ENCODE measurements at regions of chr11 and their contacts with region 1.

Region 1: DNA sequence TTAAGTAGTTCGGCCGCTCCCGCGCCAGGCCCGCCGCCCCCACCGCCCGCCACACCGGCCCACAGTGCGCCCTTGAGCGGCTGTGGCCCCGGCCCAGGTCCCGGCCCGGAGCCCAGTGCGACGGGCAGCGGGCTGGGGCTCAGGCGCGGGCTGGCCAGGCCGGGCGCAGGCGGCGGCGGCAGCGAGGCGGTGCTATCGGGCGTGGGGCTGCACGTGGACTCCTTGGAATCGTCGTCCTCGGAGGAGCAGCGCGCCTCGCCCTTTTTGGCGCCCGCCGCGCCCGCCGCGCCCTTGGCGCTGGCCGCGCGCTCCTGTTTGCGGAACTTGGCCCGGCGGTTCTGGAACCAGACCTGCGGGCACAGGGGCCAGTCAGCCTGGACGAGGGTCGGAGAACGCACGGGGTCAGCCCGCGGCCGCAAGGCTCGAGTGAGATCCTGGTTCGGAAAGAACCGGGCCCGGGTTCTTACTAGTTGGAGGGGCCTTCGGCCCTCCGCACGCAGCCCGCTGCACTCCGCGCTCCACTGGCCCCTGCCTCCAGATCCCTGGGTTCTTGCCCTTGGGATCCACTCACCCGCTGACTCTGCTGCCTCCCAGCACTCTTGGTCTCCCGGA is 4.0 kb downstream of the PHOX2A start:
- DNase-seq: peak in 4 of 5 donors; percentile 41 to 76 (median 68)
- H3K4me3 ChIP-seq: peak overlapping the region; percentile 25
- H3K27ac ChIP-seq: no peak overlapping the region
- H3K4me1 ChIP-seq: peaks cover 11% of the 10 kb centered on the region
- H3K27me3 ChIP-seq: peaks cover 12% of the 10 kb centered on the region
- CTCF ChIP-seq: peak in 1 of 3 donors; percentile 9
- EP300 ChIP-seq: no peak
- POLR2A ChIP-seq: no peak

Region 2: DNA sequence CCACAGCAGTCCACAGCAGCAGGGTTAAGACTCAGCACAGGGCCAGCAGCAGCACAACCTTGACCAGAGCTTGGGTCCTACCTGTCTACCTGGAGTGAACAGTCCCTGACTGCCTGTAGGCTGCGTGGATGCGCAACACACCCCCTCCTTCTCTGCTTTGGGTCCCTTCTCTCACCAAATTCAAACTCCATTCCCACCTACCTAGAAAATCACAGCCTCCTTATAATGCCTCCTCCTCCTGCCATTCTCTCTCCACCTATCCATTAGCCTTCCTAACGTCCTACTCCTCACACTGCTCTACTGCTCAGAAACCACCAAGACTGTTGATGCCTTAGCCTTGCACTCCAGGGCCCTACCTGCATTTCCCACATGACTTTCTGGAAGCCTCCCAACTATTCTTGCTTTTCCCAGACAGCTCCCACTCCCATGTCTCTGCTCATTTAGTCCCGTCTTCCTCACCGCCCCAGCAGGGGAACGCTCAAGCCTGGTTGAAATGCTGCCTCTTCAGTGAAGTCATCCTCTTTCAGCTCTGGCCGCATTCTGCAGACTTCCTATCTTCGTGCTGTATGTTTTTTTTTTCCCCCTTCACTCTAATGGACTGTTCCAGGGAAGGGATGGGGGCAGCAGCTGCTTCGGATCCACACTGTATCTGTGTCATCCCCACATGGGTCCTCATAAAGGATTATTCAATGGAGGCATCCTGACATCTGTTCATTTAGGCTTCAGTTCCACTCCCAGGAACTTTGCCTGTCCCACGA is 237.9 kb before region 1 on chr11:
- intact Hi-C with region 1: loop called in 1 of 4 experiments (anchors 10 kb)
- DNase-seq: no peak
- H3K4me3 ChIP-seq: no peak overlapping the region
- H3K27ac ChIP-seq: no peak overlapping the region
- H3K4me1 ChIP-seq: peaks cover 3% of the 10 kb centered on the region
- H3K27me3 ChIP-seq: no peaks in the 10 kb centered on the region
- CTCF ChIP-seq: no peak
- EP300 ChIP-seq: no peak
- POLR2A ChIP-seq: no peak

Region 3: GRCh38 chr11:72123117-72123653 is 116.8 kb before region 1 on chr11:
- intact Hi-C with region 1: no loop called
- DNase-seq: no peak
- H3K4me3 ChIP-seq: no peak overlapping the region
- H3K27ac ChIP-seq: no peak overlapping the region
- H3K4me1 ChIP-seq: no peaks in the 10 kb centered on the region
- H3K27me3 ChIP-seq: no peaks in the 10 kb centered on the region
- CTCF ChIP-seq: no peak
- EP300 ChIP-seq: no peak
- POLR2A ChIP-seq: no peak